ENCODE measurements at regions of chr1 and their contacts with region 1.

Region 1: GRCh38 chr1:235050911-235051360 is 77.7 kb downstream of the TOMM20 start:
- DNase-seq: peak in 1 of 2 donors; percentile 85
- H3K4me3 ChIP-seq: no peak overlapping the region
- H3K27ac ChIP-seq: peak overlapping the region; percentile 62 to 85
- H3K4me1 ChIP-seq: peaks cover 9 to 46% of the 10 kb centered on the region in 2 donors
- H3K27me3 ChIP-seq: no peaks in the 10 kb centered on the region
- CTCF ChIP-seq: no peak

Region 2: DNA sequence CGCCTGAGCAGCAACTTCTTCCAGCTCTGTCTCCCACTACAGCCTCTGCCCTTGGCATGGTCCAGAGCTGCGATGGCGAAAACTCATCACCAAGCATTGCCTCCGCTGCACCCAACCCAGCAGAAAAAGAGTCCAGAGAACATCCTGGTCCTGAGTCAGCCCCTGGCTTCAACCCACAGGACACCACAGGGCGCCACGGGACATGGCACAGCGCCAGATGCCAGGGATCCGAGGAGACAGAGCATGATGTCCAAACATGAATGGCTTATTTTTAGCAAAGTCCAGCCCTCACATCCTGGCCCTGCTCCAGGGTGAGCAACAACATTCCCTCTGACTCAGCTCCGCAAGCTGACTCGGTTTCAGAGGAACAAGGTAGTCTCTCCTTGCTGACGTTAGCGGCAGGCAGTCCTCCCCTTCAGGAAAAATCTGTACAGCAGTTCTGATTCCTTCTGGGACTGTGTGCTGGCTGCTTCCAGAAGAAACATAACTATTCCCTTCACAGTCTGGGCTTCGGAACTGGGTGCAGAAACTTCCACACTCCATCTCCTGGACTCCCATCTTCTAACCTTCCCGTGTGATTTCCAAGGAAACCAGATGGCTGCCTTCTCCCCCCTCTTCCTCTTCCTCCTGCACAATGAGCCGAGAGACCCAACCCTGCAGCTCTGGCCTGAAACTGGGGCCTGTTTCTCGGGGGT is 53.6 kb before region 1 on chr1:
- intact Hi-C with region 1: loop called (anchors 1 kb)
- DNase-seq: peak; percentile 99 to 100
- H3K4me3 ChIP-seq: peak overlapping the region; percentile 28 to 29
- H3K27ac ChIP-seq: peak overlapping the region; percentile 89 to 94
- H3K4me1 ChIP-seq: peaks cover 3 to 28% of the 10 kb centered on the region in 2 donors
- H3K27me3 ChIP-seq: no peaks in the 10 kb centered on the region
- CTCF ChIP-seq: no peak

Region 3: DNA sequence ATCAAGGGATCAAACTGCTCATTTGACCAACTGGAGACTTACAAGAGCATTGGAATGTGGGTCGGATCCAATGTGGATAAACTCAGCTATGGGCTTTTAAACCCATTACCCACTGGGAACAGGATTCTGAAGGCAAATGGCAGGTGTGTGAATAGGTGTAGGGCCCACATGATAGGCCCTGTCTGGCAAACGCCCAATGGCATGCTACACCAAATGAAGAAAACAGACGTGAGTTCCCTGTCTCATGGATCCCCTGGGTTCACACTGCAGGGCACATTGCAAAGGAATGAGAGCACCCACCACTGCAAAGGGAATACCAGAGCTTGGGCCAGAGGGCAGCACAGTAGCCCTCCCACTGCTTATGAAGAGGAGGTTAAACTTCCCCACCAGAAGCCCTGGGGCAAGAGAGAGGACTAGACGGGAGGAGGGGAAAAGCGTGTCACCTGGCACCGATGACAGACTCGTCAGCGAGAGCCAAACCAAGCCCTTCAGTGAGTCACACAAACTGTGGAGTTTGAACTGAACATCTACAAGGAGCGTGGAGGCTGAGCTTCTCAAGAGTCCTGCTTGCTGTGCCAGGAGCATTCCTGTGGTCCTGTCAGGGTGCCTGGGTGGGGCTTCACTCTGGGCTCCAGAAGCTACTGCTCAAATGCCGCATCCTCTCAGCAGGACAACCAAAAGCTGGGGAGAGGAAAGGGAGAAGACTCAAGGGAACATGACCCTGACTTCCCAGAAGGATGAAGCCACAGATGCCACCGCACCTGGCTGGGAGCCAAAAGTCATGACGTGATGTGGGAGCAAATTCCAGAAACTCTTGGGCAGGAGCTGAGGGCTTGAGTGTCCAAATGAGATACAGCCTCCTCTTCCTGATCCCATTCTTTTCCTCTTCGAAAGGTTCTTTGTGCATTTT is 16.6 kb after region 1 on chr1:
- intact Hi-C with region 1: loop called (anchors 1 kb)
- DNase-seq: peak; percentile 81 to 97
- H3K4me3 ChIP-seq: no peak overlapping the region
- H3K27ac ChIP-seq: peak overlapping the region; percentile 77 to 85
- H3K4me1 ChIP-seq: peaks cover 4 to 28% of the 10 kb centered on the region in 2 donors
- H3K27me3 ChIP-seq: no peaks in the 10 kb centered on the region
- CTCF ChIP-seq: no peak

Region 4: DNA sequence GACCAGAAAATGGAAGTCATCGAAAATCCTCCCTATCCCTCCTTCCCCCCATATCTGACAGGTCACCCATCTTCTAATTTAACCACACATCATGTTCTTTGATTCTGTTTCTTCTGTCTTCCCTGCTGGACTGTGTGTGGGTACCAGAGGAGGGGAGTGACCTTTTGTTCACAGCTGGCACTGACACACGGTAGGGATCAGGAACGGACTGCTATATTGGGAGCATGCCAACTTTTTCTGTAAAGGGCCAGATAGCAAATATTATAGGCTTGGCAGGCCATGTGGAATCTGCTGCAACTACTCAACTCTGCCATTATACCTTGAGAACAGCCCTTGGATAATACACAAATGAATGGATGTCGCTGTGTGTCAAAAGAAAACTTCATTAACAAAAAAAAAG is 85.2 kb after region 1 on chr1:
- intact Hi-C with region 1: no loop called
- DNase-seq: no peak
- H3K4me3 ChIP-seq: no peak overlapping the region
- H3K27ac ChIP-seq: no peak overlapping the region
- H3K4me1 ChIP-seq: no peaks in the 10 kb centered on the region
- H3K27me3 ChIP-seq: no peaks in the 10 kb centered on the region
- CTCF ChIP-seq: no peak